SK-N-SH (cell line): ENCODE measurements at regions of chr14 and their contacts with region 1.

Region 1: DNA sequence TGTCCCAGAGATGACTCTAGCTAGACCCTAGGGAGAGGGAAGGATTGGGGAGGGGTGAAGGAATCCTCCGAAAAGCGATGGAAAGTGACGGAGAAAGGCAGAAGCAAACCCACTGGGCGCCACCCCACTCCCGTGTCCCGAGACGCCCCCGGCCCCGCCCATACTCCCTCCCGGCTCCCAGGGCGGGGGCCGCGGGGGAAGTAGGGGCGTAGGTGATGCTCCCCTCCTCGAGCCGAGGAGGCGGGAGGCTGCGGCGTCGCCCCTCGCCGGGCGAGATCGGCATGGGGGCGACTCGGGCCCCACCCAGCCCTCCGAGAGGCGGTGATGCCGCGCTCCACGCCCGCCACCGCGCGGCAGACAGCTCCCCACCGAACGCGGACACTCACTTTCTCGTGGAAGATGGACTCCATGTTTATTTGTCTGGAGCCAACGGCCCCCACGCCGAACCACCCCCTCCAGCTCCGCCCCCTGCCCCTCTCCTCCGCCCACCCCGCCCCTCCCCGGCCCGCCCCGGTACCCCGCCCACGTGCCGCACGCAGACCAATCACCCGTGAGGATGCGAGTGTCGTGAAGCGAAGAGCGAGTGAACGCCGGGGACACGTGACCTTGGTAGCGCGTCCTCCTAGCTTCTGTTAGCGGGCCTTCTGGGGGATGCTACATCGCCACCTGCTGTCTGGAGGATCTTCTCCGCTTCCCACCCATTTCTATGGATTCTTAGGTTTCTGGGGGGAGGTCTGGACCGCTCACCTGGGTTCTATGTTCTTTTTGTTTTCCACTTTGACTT is at the start of gene ATXN3:
- DNase-seq: peak; percentile 98
- H3K4me3 ChIP-seq: peak within 1 kb of the TSS; percentile 67 to 82
- H3K27ac ChIP-seq: peak within 1 kb of the TSS; percentile 89 to 90
- H3K4me1 ChIP-seq: peaks cover 3 to 4% of the 10 kb centered on the region in 2 experiments; a peak in 2 of 4 replicates
- H3K27me3 ChIP-seq: no peaks in the 10 kb centered on the region
- CTCF ChIP-seq: peak; percentile 80
- EP300 ChIP-seq: no peak
- RAD21 ChIP-seq: peak; percentile 29
- polyA plus RNA-seq, gene ATXN3: 10.2 and 13.0 TPM in 2 replicates

Region 2: DNA sequence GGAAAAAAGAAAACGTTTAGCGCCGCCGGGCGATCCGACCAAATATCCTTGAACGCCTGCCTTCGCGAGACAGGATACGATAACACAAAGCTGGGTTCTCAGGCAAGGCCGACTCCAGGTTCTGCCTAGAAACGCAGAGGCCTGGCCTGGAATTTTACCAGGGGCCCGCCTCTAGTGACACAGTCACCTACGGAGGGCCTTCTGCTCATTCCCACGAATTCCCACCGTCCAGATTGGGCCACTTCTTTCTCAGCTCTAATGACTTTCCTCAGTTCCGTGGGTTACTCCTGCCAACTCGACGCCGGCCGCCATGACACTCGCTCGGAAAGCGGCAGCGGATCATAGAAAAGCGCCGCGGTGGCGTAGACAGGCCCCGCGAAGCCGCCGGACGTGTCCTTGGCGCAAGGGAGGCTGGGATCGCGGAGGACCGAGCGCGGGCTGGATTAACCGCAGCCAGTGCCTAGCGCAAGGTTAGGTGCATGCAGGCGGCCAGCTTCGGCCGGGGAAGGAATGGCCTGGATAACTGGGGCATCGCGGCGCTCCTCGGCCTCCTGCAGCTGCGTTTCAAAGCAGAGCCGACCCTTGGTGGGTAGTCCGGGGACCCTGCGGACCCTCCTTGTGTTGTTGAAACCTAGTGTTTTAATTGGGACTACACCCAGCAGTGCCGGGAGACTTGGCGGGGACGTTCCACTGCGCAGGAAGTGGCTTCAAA is 66.5 kb before region 1 on chr14 and contains the start of gene TRIP11:
- CTCF ChIA-PET with region 1: interaction called, 4 read pairs
- POLR2A ChIA-PET with region 1: interaction called, 13 read pairs
- DNase-seq: peak; percentile 90
- H3K4me3 ChIP-seq: peak within 1 kb of the TSS; percentile 83 to 92
- H3K27ac ChIP-seq: peak within 1 kb of the TSS; percentile 96
- H3K4me1 ChIP-seq: peaks cover 7 to 12% of the 10 kb centered on the region in 2 experiments; a peak in 3 of 4 replicates
- H3K27me3 ChIP-seq: no peaks in the 10 kb centered on the region
- CTCF ChIP-seq: no peak
- EP300 ChIP-seq: no peak
- RAD21 ChIP-seq: no peak
- polyA plus RNA-seq, gene TRIP11: 4.6 and 7.2 TPM in 2 replicates

Region 3: GRCh38 chr14:92135267-92135666 is 28.9 kb after region 1 on chr14:
- CTCF ChIA-PET with region 1: interaction called, 11 read pairs
- POLR2A ChIA-PET with region 1: no interaction called
- DNase-seq: peak; percentile 22
- H3K4me3 ChIP-seq: no peak overlapping the region
- H3K27ac ChIP-seq: no peak overlapping the region
- H3K4me1 ChIP-seq: no peaks in the 10 kb centered on the region
- H3K27me3 ChIP-seq: no peaks in the 10 kb centered on the region
- CTCF ChIP-seq: peak; percentile 78
- EP300 ChIP-seq: no peak
- RAD21 ChIP-seq: peak; percentile 60

Region 4: DNA sequence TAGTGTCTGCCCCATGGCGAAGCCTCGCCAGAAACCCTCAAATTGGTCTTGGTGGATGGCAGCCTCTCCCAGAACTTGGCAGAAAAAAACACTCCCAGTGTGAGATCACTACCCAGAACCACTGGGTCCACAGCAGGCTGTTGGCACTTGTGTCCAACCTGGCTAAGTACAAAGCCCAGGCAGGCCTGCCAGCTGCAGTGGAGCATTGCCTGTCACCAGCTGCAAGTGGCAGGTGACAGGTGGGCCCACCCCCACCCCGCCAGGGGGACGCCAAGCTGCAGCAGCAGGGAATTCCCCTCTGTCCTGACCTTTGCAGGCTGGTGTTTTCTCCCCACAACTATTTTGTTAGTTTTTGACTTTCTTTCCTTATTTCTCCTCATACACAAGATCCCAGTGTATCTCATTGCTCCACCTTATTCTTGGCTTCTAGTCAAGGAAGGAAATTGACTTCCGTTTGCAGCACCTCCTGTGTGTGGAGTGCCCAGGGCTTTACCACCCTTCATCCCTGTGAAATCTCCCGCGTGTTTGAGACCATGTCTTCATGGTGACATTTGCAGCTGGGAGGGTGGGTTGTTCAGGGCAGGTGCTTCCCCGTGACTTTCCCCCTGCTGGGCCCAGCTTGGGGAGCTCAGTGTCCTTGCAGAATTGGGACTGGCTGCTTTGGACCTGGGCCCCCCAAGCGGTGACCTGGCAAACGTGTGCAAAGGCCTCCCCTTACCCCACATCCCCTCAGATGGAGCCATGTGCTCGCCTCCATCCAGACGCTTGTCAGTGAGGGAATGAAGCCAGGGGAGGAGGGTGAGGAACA is 333.4 kb after region 1 on chr14:
- CTCF ChIA-PET with region 1: no interaction called
- POLR2A ChIA-PET with region 1: no interaction called
- DNase-seq: no peak
- H3K4me3 ChIP-seq: no peak overlapping the region
- H3K27ac ChIP-seq: no peak overlapping the region
- H3K4me1 ChIP-seq: no peaks in the 10 kb centered on the region
- H3K27me3 ChIP-seq: no peaks in the 10 kb centered on the region
- CTCF ChIP-seq: no peak
- EP300 ChIP-seq: no peak
- RAD21 ChIP-seq: no peak